ENCODE measurements at regions of chr14 and their contacts with region 1.

Region 1: DNA sequence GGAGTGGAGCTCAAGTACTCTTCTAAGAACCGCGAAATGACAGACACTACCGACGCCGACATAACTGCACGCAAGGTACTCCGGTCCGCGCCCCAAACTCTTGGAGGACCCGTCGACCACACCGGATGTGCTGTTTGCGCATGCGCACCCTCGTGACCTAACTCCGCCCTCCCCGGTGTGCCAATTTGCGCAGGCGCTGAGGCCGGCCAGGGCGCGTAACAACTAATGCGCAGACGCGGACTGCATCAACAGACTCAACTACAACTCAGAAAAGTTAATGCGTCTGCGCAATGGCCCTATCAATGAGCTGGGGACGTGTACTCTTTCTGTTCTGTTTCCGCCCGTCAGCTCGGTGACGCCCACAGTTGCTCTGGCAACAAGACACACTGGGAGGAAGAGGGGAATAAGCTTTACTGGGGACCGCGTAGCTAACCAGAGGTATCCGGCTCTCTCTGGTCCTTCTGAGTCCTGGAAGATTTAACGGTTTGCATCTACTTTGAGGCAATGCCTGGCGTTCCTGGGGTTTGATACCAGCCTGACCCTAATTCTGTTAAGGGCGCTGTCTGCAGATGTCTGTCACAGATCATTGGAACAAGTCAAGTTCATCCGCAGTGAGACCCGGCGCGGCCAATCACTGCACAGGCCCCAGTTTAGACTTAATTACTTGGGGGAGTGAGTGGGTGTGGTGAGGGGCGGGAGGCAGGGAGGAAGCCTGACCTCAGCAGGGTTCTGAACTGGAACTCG is at the start of gene DAD1:
- DNase-seq: peak; percentile 100
- ATAC-seq: peak; percentile 89
- H3K4me3 ChIP-seq: peak within 1 kb of the TSS; percentile 75 to 84 (median 78)
- H3K4me3 Mint-ChIP-seq: peak within 1 kb of the TSS; percentile 99
- H3K27ac ChIP-seq: peak within 1 kb of the TSS; percentile 97
- H3K27ac Mint-ChIP-seq: peak within 1 kb of the TSS; percentile 96
- H3K4me1 ChIP-seq: peaks cover 30% of the 10 kb centered on the region in 2 donors
- H3K4me1 Mint-ChIP-seq: peaks cover 53% of the 10 kb centered on the region
- H3K27me3 ChIP-seq: no peaks in the 10 kb centered on the region
- H3K27me3 Mint-ChIP-seq: peaks cover 2% of the 10 kb centered on the region
- CTCF ChIP-seq: no peak
- total RNA-seq, gene DAD1: 76.1 and 77.4 TPM in 2 replicates

Region 2: DNA sequence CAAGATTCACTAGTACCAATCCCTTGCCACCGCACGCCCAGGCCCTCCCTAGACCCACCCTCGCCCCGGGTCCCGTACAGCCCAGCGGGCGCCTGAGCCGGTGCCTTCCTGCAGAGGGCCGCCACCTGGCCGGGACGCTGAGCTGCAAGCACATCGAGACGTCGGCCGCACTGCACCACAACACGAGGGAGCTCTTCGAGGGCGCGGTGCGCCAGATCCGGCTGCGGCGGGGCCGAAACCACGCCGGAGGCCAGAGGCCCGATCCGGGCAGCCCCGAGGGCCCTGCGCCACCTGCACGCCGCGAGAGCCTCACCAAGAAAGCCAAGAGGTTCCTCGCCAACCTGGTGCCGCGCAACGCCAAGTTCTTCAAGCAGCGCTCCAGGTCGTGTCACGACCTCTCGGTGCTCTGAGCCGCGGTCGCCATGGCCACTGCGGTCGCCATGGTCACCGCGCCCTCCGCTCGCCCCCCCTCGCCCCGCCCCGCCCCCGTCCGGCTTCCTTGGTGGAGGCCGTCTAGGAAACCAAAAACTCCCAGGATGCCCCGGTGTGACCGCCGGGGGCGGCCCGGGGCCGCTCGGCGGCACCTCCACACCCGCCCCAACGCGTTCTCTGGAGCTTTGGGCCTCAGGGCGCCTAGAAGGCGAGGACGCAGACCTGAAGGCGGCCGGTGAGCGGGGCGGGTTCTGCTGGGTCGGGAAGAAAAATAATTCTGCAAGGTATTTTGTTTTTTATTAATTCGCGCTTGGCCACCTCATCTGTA is 297.4 kb after region 1 on chr14:
- CTCF ChIA-PET with region 1: interaction called, 3 read pairs
- POLR2A ChIA-PET with region 1: no interaction called
- intact Hi-C with region 1: loop called (anchors 1 kb)
- DNase-seq: peak; percentile 89
- ATAC-seq: peak; percentile 62
- H3K4me3 ChIP-seq: peak overlapping the region; percentile 44 to 83 (median 67)
- H3K4me3 Mint-ChIP-seq: peak overlapping the region; percentile 97
- H3K27ac ChIP-seq: peak overlapping the region; percentile 85 to 94
- H3K27ac Mint-ChIP-seq: peak overlapping the region; percentile 99
- H3K4me1 ChIP-seq: peaks cover 55 to 83% of the 10 kb centered on the region in 2 donors
- H3K4me1 Mint-ChIP-seq: peaks cover 71% of the 10 kb centered on the region
- H3K27me3 ChIP-seq: no peaks in the 10 kb centered on the region
- H3K27me3 Mint-ChIP-seq: no peaks in the 10 kb centered on the region
- CTCF ChIP-seq: peak; percentile 42

Region 3: GRCh38 chr14:22929104-22929847 is 340.0 kb after region 1 on chr14 and contains the start of gene PRMT5:
- CTCF ChIA-PET with region 1: interaction called, 3 read pairs
- POLR2A ChIA-PET with region 1: interaction called, 3 read pairs
- intact Hi-C with region 1: loop called (anchors 1 kb)
- DNase-seq: peak; percentile 100
- ATAC-seq: peak; percentile 94
- H3K4me3 ChIP-seq: peak within 1 kb of the TSS; percentile 64 to 100 (median 96)
- H3K4me3 Mint-ChIP-seq: no peak within 1 kb of the TSS
- H3K27ac ChIP-seq: peak within 1 kb of the TSS; percentile 65 to 86
- H3K27ac Mint-ChIP-seq: no peak within 1 kb of the TSS
- H3K4me1 ChIP-seq: peaks cover 13 to 23% of the 10 kb centered on the region in 2 donors
- H3K4me1 Mint-ChIP-seq: peaks cover 26% of the 10 kb centered on the region
- H3K27me3 ChIP-seq: no peaks in the 10 kb centered on the region
- H3K27me3 Mint-ChIP-seq: no peaks in the 10 kb centered on the region
- CTCF ChIP-seq: no peak
- total RNA-seq, gene PRMT5: 38.8 and 48.6 TPM in 2 replicates

Region 4: GRCh38 chr14:23034483-23035302 is 445.4 kb after region 1 on chr14 and contains the start of gene PSMB5:
- CTCF ChIA-PET with region 1: no interaction called
- POLR2A ChIA-PET with region 1: no interaction called
- intact Hi-C with region 1: loop called (anchors 1 kb)
- DNase-seq: peak; percentile 96
- ATAC-seq: peak; percentile 92
- H3K4me3 ChIP-seq: peak within 1 kb of the TSS; percentile 62 to 100 (median 66)
- H3K4me3 Mint-ChIP-seq: peak within 1 kb of the TSS; percentile 86
- H3K27ac ChIP-seq: peak within 1 kb of the TSS; percentile 81 to 93
- H3K27ac Mint-ChIP-seq: peak within 1 kb of the TSS; percentile 93
- H3K4me1 ChIP-seq: peaks cover 14 to 20% of the 10 kb centered on the region in 2 donors
- H3K4me1 Mint-ChIP-seq: peaks cover 28% of the 10 kb centered on the region
- H3K27me3 ChIP-seq: no peaks in the 10 kb centered on the region
- H3K27me3 Mint-ChIP-seq: no peaks in the 10 kb centered on the region
- CTCF ChIP-seq: no peak
- total RNA-seq, gene PSMB5: 29.0 and 31.9 TPM in 2 replicates